Lower leg skin (tissue), 4 donors: ENCODE measurements at regions of chr4 and their contacts with region 1.

Region 1: DNA sequence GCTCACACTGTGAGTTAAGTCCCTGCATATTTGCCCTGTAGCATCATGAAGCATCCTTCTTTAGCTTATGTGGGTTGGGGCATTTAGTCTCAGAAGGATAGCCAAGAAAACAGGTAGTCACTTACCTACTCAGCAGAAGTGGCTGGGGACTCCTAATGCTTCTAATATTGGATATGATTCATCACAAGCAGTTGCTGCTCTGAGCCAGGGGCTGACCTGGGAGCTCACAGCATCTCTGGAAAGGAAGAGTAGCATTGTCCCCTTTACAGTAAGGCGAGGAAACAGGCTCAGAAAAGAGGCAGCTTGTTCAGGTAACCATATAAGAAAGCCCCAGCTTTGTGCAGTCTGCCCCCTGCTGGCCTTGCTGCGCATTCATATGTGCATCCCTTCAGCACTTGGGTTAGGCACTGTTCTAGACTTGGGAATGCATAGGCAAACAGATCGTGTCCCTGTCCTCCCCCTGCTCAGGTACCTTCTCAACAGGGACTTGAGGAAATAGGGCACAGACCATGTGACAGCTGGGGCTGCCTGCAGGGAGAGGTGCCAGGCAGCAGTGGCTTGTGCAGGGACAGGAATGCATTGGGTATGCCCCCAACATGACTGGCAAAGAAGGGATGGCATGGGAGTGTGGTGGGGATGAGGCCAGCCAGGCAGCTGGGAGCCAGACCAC is 35.7 kb upstream of the TBC1D14 start:
- DNase-seq: peak; percentile 65 to 95
- H3K4me3 ChIP-seq: no peak overlapping the region
- CTCF ChIP-seq: no peak
- POLR2A ChIP-seq: no peak

Region 2: DNA sequence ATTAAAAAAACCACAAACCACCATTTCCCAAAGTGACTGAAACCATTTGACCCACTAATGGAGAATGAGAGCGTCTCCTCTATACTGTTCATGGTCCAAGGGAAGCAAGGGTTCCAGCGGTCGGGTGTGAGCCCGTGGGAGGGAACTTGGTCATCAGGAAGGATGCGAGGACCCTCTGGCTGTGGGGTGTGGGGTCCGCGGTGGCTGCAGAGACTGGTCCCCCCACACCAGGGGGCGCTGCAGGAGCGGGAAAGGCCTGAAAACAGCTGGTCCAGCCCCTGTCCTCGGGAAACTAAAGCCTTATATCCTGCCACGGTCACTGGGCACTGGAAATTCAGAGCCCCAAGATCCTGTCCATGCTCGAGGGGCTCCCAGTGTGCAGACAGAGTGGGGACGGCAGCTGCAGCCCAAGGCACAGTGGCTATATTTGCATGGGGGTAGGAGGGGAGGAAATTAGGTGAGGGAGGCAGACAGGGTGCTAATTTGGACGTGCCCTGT is 153.7 kb before region 1 on chr4:
- intact Hi-C with region 1: loop called (anchors 5 kb)
- DNase-seq: peak; percentile 73 to 96
- H3K4me3 ChIP-seq: no peak overlapping the region
- CTCF ChIP-seq: peak in 1 of 3 donors; percentile 65
- POLR2A ChIP-seq: no peak

Region 3: GRCh38 chr4:7663075-7663541 is 789.2 kb after region 1 on chr4:
- intact Hi-C with region 1: no loop called
- DNase-seq: no peak
- H3K4me3 ChIP-seq: no peak overlapping the region
- CTCF ChIP-seq: no peak
- POLR2A ChIP-seq: no peak